ENCODE measurements at regions of chr9 and their contacts with region 1.

Region 1: DNA sequence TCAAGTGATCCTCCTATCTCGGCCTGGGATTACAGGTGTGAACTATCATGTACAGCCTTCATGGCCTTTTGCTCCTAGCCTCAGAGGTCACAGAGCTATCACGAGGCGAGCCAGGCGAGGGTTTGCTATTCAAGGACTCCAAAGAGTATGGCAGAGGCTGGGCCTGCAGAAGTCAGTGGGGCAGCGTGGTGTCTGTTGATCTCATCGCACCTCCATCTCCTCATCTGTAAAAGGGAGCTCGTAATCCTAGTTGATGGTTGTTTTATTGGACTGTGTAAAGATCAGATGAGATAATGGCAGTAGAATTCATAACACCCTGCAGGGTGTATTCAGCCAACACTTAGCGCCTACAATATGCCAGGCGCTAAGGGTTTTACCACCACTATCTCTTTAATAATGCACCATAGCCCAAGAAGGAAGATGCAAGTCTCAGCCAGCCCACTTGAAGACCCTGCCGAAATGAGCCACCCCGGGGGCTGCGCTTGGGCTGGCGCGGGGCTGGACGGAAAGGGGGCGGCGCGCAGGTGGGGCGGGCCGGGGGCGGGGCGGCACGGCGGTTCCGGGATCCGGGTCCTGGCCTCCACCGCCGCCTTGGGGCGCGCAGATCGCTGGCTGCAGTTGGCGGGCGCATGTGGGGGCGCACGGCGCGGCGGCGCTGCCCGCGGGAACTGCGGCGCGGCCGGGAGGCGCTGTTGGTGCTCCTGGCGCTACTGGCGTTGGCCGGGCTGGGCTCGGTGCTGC is at the start of gene GALNT12:
- DNase-seq: peak in 2 of 3 donors; percentile 63 to 73
- H3K4me3 ChIP-seq: peak within 1 kb of the TSS; percentile 48 to 87 (median 73)
- H3K27ac ChIP-seq: peak within 1 kb of the TSS in 1 of 2 experiments; percentile 25
- H3K4me1 ChIP-seq: peaks cover 0 to 24% (median 15%) of the 10 kb centered on the region in 4 experiments
- H3K27me3 ChIP-seq: peaks cover 0 to 5% (median 0%) of the 10 kb centered on the region in 5 experiments

Region 2: DNA sequence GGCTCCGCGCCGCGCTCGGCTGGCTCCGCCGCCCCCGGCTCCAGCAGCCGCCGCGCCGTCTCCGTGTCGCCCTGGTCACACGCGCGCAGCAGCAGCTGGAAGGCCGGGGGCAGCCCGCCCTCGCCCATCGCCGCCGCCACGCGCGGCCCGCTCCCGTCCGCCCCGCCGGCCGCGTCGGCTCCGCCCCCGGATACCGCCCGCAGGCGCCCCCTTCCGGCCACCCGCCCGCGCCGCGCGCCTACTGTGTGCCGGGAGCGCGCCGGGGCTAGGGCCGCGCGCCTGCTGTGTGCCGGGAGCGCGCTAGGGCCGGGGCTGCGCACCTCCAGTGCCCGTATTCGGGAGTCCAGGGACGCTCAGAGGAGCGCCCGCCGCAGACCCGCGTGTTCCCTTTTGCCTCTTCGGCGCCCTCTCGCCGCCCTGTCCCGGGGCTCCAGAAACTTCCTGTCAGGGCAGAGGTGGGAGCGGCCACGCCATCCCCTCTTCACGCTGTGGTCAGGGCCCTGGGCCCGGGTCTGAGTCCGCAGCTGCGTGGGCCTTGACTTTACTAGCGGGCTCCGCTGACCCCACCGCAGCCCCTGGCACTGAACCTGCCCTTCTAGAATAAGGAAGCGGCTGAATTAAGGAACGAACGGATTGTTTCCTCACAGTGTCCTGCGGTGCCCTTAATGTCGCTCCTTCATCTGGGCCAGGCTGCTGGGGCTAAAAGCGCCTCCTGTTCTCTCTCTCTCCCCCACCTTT is 10.7 kb before region 1 on chr9 and contains the start of gene ANKS6:
- CTCF ChIA-PET with region 1: interaction called, 10 read pairs
- POLR2A ChIA-PET with region 1: no interaction called
- DNase-seq: peak; percentile 68 to 83 (median 78)
- H3K4me3 ChIP-seq: peak within 1 kb of the TSS; percentile 47 to 82 (median 70)
- H3K27ac ChIP-seq: no peak within 1 kb of the TSS
- H3K4me1 ChIP-seq: peaks cover 0 to 17% (median 12%) of the 10 kb centered on the region in 4 experiments
- H3K27me3 ChIP-seq: no peaks in the 10 kb centered on the region

Measured in common myeloid progenitor, CD34-positive (primary cell).